PC-9 (cell line): ENCODE measurements at regions of chr5 and their contacts with region 1.

Region 1: GRCh38 chr5:79535477-79536192 is 21.7 kb upstream of the HOMER1 start:
- DNase-seq: no peak
- H3K4me3 ChIP-seq: no peak overlapping the region
- H3K27ac ChIP-seq: no peak overlapping the region
- H3K4me1 ChIP-seq: no peaks in the 10 kb centered on the region
- H3K27me3 ChIP-seq: no peaks in the 10 kb centered on the region
- CTCF ChIP-seq: peak; percentile 31

Region 2: DNA sequence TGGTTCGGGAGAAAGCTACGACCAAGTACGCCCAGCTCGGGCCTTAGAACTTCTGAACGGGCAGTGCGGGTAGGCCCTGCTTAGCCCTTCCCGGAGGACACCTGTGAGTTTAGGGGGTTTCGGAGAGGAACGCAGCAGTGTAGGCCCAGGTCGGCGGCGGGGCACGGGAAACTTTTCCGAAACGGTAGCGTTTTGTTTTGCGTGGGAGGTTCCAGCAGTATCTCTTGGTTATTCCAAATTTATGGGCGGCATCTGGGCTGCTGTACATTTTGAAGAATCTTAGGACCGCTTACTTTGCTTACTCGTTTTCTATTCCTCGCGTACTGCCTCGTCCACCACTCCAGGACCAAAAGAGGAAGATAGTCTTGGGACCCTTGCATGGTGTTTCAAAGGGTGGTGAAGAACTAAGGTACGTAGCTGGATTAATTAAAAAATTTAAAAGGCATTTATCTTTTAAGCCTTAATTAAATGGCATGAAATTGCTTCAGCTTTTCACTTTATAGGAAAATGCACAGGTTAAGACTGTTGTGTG is 77.1 kb after region 1 on chr5:
- CTCF ChIA-PET with region 1: no interaction called
- POLR2A ChIA-PET with region 1: interaction called, 10 read pairs
- intact Hi-C with region 1: no loop called
- DNase-seq: no peak
- H3K4me3 ChIP-seq: peak overlapping the region; percentile 83
- H3K27ac ChIP-seq: peak overlapping the region; percentile 83
- H3K4me1 ChIP-seq: peaks cover 14% of the 10 kb centered on the region
- H3K27me3 ChIP-seq: no peaks in the 10 kb centered on the region
- CTCF ChIP-seq: no peak